ENCODE measurements at regions of chr1 and their contacts with region 1.

Region 1: DNA sequence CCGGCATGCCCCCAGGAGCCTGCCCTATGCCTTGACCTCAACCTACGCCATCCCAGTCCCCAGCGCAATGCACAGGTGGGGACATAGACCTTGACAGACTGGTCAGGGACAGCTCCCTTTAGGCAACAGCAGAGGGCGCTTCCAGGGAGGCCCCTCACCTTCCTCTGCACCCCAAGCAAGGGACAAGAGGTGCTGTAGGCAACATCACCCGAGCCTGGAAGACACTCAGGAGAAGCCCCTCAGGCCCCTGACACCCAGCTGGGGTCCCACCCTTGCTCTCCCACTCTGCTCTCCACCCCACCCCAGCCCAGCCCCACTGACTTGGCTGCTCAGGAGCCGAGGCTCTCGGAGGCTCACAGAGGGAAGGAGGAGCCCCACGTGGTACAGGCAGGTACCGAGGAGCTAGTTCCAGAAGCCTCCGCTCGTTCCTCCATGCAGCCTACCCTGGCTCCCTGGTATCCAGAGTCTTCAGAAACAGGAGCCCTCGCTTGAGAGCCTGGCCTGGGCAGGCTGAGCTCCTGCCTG is 2.4 kb upstream of the WNT3A start:
- DNase-seq: peak in 1 of 2 donors; percentile 8
- ATAC-seq: peak in 5 of 8 donors; percentile 34 to 55 (median 39)
- H3K4me3 ChIP-seq: no peak overlapping the region
- H3K27ac ChIP-seq: no peak overlapping the region
- H3K4me1 ChIP-seq: peaks cover 0 to 5% (median 2%) of the 10 kb centered on the region in 9 donors
- H3K27me3 ChIP-seq: peaks cover 24 to 93% (median 74%) of the 10 kb centered on the region in 7 donors
- CTCF ChIP-seq: peak in 7 of 9 donors; percentile 20 to 44 (median 31)

Region 2: DNA sequence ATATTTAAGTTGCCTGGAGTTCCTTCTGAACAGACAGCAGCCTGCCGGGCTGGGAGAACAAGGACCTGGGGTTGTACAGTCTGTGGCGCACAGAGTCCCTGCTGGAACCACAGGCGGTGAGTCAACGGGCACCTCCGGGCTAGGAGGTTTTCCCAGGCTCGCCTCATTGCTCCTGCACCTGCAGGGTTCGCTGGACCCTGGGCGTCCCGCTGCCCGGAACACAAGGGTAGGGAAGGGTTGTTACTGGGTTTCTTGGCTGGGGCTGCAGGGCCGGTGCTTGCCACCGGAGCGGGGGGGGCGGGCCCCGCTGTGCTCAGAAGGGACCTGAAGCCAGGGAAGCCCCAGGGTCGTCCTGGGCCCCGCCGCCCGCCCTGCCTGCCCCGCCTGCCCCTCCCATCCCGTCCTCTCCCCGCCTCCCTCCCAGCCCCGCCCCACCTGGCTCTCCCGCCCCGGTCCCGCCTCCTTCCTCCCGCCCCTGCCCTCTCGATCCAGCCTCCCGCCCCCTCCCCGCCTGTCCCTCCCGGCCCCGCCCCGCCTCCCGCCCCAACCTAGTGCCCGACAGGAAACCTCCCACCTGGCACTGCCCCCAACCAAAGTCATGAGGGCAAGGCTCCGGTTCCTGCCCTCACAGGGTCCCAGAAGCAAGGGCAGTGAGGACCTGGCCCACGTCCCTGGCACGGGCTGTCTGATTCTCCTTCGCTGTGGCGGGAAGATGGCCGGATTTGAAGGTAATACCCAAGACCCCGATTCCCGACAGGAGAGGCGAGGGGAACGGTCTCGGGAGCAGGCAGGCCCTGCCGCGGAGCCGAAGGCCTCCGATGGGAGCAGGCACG is 276.1 kb before region 1 on chr1:
- intact Hi-C with region 1: no loop called
- DNase-seq: peak; percentile 83 to 84
- ATAC-seq: peak; percentile 60 to 71 (median 66)
- H3K4me3 ChIP-seq: peak overlapping the region; percentile 36 to 79 (median 62)
- H3K27ac ChIP-seq: peak overlapping the region; percentile 56 to 87 (median 78)
- H3K4me1 ChIP-seq: peaks cover 10 to 41% (median 26%) of the 10 kb centered on the region in 9 donors
- H3K27me3 ChIP-seq: peaks cover 0 to 9% (median 0%) of the 10 kb centered on the region in 7 donors
- CTCF ChIP-seq: peak in 1 of 9 donors; percentile 9

Region 3: DNA sequence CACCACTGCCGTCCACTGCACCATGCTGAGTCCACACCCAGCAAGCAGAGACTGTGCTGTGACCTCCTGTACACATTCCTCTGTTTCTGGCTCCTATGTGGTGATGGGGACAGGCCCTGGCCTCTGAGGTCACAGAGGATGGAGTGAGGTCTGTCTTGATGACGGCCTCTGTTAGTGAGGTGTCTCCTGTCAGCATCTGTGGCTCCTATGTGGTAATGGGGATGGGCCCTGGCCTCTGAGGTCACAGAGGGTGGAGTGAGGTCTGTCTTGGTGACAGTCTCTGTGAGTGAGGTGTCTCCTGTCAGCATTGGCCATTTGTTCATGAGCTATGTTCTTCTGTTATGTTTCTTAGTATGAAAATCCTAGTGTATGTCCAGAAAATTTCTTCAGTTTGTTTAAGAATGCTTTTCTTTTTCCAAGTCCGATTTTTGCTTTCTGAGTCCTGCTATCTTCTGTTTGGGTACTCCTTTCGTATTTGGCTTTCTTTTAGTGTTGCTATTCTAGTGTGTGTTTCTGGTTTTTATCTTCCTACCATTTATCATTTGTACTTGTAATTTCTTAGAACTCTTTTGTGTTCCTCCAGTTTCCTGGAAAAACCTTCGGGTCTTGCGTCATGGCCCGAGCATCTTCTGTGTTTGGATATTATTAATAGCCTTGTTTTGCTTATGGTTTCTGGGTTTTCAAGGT is 255.8 kb before region 1 on chr1:
- intact Hi-C with region 1: no loop called
- DNase-seq: peak in 1 of 2 donors; percentile 41
- ATAC-seq: peak in 7 of 8 donors; percentile 43 to 77 (median 68)
- H3K4me3 ChIP-seq: no peak overlapping the region
- H3K27ac ChIP-seq: peak overlapping the region in 7 of 10 donors; percentile 50 to 92 (median 89)
- H3K4me1 ChIP-seq: peaks cover 3 to 93% (median 56%) of the 10 kb centered on the region in 9 donors
- H3K27me3 ChIP-seq: no peaks in the 10 kb centered on the region
- CTCF ChIP-seq: no peak

Region 4: GRCh38 chr1:228059634-228060457 is 55.5 kb after region 1 on chr1:
- intact Hi-C with region 1: loop called in 1 of 10 experiments (anchors 10 kb)
- DNase-seq: no peak
- ATAC-seq: peak in 4 of 8 donors; percentile 14 to 47 (median 18)
- H3K4me3 ChIP-seq: peak overlapping the region in 4 of 10 donors; percentile 2 to 42 (median 10)
- H3K27ac ChIP-seq: no peak overlapping the region
- H3K4me1 ChIP-seq: peaks cover 0 to 22% (median 14%) of the 10 kb centered on the region in 9 donors
- H3K27me3 ChIP-seq: peaks cover 49 to 93% (median 87%) of the 10 kb centered on the region in 7 donors
- CTCF ChIP-seq: no peak

Region 5: DNA sequence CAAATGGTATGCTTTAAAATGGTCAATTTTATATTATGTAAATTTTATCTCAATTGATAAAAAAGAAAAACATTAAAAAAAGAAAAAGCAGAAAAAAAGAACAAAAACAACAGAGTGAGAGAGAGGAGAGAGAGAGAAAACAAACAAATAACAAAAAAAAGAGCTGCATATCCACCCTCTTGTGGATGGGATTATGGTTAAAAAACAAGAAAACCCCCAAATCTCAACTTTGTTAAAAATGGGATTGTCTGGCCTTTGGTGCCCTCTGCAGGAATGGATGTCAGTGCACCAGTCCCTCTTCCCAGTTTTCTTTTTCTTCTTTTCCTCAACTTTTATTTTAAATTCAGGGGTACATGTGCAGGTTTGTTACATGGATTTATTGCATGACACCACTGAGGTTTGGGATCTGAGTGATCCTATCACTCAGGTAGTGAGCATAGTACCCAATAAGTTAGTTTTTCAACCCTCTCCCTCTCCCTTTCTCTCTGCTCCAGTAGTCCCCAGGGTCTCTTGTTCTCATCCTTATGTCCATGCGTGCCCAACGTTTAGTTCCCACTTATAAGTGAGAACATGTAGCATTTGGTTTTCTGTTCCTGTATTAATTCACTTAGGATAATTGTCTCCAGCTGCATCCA is 510.9 kb after region 1 on chr1:
- intact Hi-C with region 1: loop called in 1 of 10 experiments (anchors 5 kb)
- DNase-seq: no peak
- ATAC-seq: peak in 1 of 8 donors; percentile 52
- H3K4me3 ChIP-seq: no peak overlapping the region
- H3K27ac ChIP-seq: no peak overlapping the region
- H3K4me1 ChIP-seq: no peaks in the 10 kb centered on the region
- H3K27me3 ChIP-seq: peaks cover 0 to 32% (median 0%) of the 10 kb centered on the region in 7 donors
- CTCF ChIP-seq: peak; percentile 27 to 77 (median 69)

Measured in heart right ventricle (tissue), 16 donors.